GM13976 (cell line): ENCODE measurements at regions of chr16 and their contacts with region 1.

Region 1: DNA sequence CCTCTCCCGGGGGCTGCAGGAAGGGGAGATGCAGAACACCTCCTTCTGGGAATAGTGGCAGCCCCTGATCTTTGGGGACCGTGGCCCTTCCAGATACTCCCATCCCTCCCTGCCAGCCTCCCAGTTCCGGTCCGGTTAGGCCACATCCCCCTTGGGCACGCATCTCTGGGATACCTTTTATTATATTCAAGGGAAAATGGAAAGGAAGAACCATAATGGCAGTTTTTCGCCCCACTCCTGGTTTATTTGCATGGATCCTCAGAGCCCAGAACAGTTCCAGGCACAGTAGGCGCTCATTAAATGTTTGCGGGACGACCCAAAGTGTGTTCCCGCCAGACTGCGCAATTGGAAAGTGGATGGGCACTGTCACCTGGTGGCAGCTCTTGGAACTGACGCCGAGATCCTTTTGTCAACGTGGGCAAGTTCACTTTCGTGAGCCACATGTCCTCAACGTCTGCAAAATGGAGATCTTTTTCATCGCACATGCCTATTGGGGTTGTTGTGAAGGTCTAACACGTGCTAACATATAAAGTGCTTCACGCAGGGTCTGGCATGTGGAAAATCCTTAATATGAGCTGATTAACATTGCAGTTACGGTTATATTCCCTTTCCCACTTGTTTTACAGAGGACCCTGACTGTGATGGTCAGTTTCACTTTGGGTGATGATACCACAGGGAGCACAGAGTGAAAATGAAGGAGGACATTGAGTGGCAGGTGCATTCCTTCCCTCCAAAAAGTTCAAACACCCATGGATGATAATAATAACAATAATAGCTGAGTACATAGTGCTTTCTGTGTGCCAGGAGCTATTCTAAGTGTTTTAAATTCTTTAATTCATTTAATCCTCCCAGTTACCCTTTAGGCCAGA is 1.7 kb upstream of the GPRC5B start:
- DNase-seq: peak; percentile 76
- CTCF ChIP-seq: peak; percentile 90

Region 2: DNA sequence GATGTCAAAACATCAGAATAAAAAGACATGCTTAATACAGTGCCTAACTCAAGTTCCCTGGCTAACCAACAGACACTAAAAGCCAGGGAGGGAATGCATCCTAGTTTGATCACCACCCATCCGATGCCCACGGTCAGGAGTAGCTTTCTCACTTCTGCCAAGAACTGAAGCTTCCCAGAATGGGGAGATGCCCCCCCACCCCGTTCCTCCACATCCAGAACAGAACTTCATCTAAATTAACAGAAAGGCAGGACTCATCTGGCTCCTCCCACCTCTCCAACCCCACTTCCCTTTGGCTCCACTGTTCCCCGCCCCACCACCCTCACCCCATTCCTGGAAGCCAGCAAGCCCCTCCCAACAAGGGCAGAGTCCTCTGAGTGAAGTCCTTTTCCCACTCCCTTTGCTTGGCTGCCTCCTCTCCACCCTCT is 398.1 kb before region 1 on chr16:
- in situ Hi-C with region 1: no loop called
- DNase-seq: no peak
- CTCF ChIP-seq: no peak

Region 3: DNA sequence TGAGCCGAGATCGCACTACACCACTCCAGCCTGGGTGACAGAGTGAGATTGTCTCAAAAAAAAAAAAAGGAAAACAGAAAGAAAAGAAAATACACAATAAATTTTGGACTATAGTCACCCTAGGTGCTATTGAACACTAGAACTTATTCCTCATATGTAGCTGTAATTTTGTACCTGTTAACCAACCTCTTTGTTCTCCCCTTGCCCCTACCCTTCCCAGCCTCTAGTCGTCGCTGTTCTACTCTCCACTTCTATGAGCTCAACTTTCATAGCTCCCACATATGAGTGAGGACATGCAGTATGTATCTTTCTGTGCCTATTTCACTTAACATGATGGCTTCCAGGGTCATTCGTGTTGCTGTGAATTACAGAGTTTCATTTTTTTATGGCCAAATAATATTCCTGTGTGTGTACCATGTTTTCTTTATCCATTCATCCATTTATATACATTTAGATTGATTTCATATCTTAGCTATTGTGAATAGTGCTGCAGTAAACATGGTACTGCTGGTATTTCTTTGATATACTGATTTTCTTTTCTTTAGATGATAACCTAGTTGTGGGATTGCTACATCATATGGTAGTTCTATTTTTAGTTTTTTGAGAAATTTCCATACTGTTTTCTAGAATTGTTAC is 302.5 kb before region 1 on chr16:
- in situ Hi-C with region 1: loop called (anchors 10 kb)
- DNase-seq: no peak
- CTCF ChIP-seq: peak; percentile 45